Left cardiac atrium (tissue), 4 donors: ENCODE measurements at regions of chr12 and their contacts with region 1.

Region 1: GRCh38 chr12:85866986-85867776 is 6.9 kb upstream of the NTS start:
- DNase-seq: no peak
- ATAC-seq: peak; percentile 74 to 83

Region 2: DNA sequence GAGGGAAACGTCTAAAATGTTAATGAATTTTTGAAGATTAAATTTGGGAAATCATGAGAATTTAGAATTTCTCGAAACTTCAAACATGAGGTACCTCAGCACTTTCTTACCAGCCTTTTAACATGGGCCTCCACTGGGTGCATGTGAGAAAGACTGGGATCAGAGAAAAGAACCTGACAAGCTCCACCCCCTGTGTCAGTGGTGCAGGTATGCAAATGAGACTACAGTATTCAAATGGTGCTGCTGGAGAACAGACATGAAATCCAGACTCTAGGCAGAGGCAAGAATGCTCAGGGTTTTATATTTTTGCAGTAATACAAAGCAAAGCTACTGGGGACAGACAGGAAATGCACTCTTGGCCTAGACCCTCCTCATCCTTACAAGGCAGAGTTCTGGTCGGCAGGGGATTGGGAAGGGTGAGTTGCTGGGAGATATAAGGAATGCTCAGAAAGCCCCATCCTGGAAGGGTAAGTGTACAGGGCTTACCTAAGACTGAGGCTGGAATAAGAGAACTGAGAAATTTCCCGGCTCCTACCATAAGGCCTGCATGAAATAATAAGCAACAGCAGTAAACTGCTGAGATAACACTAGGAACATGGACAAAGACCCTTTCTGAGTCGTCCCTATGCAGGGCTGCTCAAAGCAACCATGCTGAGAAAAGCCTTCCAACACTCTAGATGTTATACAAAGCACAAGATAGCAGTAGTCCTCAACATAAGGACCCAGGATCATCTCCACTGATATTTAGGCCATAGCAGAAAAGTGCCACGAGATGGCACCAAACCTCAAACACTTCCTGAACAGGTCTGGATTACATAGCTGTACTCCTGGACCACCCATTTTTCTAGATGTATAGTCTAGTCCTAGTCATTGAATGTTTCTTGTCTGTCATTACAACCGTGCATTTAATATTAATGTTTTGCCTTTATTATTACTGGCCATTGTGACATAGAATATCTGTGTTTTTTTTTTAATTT is 291.8 kb before region 1 on chr12:
- intact Hi-C with region 1: loop called (anchors 5 to 10 kb)
- DNase-seq: peak; percentile 39
- ATAC-seq: peak; percentile 71 to 77

Region 3: GRCh38 chr12:85823436-85824180 is 43.6 kb before region 1 on chr12:
- intact Hi-C with region 1: no loop called
- DNase-seq: no peak
- ATAC-seq: peak in 1 of 2 donors; percentile 53